ENCODE measurements at regions of chr1 and their contacts with region 1.

Region 1: DNA sequence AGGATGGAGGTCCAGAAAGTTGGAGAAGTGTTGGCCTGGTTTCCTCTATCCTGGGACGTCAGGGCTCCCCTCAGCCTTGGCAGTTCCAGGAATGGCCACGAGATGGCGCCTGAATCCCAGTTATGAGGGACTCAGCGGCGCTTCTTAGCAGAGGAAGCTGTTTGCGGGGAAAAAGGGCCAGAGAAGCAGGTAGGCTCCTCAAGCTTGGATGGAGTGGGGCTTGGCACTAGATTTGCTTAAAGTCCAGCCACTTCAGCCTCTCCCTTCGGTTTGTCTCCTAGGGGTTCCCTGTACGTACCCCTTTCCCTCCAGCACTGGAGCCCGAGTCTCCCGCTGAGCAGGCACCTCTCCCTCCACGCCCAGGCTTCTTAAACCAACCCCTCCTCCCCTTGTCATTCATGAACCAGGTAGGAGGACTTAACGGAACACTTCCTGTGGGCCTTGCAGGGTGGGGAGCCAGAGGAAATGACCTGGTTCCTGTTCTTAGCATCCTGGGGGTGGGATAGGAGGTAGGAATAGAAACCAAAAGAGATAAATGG is 32.0 kb upstream of the TENT5B start:
- DNase-seq: peak; percentile 64
- ATAC-seq: peak; percentile 98
- H3K4me3 ChIP-seq: no peak overlapping the region
- H3K27ac ChIP-seq: no peak overlapping the region
- H3K4me1 ChIP-seq: no peaks in the 10 kb centered on the region
- H3K27me3 ChIP-seq: 0 out of 2 replicates have a peak, but pooled peaks cover 2% of the 10 kb centered on the region
- CTCF ChIP-seq: peak; percentile 96
- POLR2A ChIP-seq: 0 out of 2 replicates have a peak, but pooled peaks have one; percentile 21
- RAD21 ChIP-seq: peak; percentile 96

Region 2: GRCh38 chr1:26417111-26417759 is 627.4 kb before region 1 on chr1:
- CTCF ChIA-PET with region 1: no interaction called
- POLR2A ChIA-PET with region 1: no interaction called
- dilution Hi-C with region 1: no loop called
- in situ Hi-C with region 1: no loop called
- intact Hi-C with region 1: no loop called
- DNase-seq: peak; percentile 64
- ATAC-seq: peak; percentile 97
- H3K4me3 ChIP-seq: no peak overlapping the region
- H3K27ac ChIP-seq: no peak overlapping the region
- H3K4me1 ChIP-seq: no peaks in the 10 kb centered on the region
- H3K27me3 ChIP-seq: peaks cover 64% of the 10 kb centered on the region
- CTCF ChIP-seq: peak; percentile 78
- POLR2A ChIP-seq: no peak
- RAD21 ChIP-seq: peak; percentile 71

Region 3: DNA sequence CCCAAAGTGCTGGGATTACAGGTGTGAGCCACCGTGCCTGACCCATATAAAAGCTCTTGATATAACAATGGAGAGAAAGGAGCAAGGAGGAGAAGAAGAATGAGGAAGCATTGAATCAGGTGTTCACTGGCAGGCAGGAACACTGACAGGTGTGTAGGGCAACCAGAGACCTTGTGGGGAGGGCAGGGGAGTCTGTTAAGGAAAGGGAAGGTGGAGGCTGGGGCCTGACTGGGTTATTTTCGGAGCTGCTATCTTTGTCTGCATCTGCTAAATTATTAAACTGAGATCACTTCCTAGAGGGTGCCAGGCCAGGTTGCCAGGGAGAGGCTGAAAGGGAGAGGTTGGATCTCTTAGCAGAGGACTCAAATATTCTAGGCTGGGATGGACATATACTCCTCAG is 58.0 kb before region 1 on chr1:
- CTCF ChIA-PET with region 1: no interaction called
- POLR2A ChIA-PET with region 1: no interaction called
- dilution Hi-C with region 1: no loop called
- in situ Hi-C with region 1: no loop called
- intact Hi-C with region 1: no loop called
- DNase-seq: no peak
- ATAC-seq: no peak
- H3K4me3 ChIP-seq: no peak overlapping the region
- H3K27ac ChIP-seq: no peak overlapping the region
- H3K4me1 ChIP-seq: peaks cover 11% of the 10 kb centered on the region
- H3K27me3 ChIP-seq: no peaks in the 10 kb centered on the region
- CTCF ChIP-seq: no peak
- POLR2A ChIP-seq: no peak
- RAD21 ChIP-seq: no peak

Region 4: DNA sequence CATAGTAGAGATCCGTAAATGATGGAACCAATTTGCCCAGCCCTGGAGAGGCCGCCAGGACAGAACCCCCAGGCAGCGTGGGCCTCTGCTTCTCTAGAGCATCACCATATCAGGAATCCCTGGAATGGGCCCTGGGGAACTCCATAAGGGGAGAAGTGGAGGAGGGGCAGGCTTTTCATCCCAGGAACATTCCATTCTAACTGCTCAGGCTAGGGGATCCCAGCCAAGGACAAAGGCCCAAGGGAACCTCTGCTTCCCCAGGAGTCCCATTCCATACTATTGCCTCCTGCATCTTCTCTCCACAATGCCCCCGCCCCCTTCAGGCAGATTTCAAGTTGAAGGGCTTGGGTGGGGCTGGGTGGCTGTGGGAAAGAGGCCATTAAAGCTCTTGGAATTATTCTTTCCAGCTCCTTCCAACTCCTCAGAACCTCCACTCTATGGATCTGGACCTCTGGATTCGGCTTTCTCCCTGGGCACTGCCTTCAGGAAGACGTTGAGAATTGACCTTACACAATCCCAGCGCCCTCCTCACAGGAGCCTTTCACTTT is 45.2 kb before region 1 on chr1:
- CTCF ChIA-PET with region 1: interaction called, 7 read pairs
- POLR2A ChIA-PET with region 1: no interaction called
- dilution Hi-C with region 1: no loop called
- in situ Hi-C with region 1: no loop called
- intact Hi-C with region 1: loop called (anchors 1 kb)
- DNase-seq: peak; percentile 98
- ATAC-seq: peak; percentile 70
- H3K4me3 ChIP-seq: no peak overlapping the region
- H3K27ac ChIP-seq: peak overlapping the region; percentile 88
- H3K4me1 ChIP-seq: peaks cover 51% of the 10 kb centered on the region
- H3K27me3 ChIP-seq: no peaks in the 10 kb centered on the region
- CTCF ChIP-seq: no peak
- POLR2A ChIP-seq: no peak; the same call in 1 of the 2 replicates
- RAD21 ChIP-seq: no peak; the same call in 1 of the 2 replicates

Region 5: DNA sequence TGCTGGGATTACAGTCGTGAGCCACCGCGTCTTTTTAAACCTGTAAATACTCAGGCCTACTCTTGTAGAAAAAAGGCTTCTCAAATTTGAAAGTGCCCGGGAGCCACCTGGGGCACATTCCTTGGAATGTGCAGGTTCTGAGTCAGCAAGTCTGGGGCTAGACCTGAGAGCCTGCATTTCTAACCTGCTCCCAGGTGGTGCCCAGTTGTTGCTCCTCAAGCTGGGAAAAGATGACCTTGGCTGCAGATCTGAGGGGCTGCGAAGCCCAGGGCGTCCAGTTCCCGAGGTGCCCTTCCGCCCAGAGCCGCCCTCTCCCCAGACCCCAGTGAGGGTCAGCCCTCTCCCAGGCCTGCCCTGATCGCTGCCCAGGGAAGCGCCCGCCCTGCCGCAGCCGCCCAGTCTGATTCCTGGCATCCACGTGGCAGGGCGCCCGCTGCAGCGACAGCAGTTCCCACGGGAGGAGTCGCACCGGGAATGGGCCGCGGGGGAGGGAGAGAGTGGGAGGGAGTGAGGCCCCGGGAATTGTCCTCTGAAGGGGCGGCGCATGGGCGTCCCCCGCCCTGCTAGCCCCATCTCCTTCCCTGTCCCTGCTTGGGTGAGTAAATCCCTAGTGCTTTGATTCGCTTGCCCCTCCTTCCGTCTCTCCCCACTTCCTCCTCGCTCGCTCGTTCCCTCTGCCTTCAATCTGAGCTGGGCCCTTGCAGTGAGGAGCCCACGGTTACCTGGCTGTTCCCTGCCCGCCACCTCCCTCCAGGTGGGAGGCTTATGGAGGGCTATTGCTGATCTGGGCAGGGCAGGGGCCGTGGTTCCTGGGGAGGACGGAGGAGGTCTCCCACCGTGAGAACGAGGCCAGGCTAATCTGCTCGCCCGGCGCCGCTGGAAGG is 13.2 kb before region 1 on chr1:
- CTCF ChIA-PET with region 1: interaction called, 17 read pairs
- POLR2A ChIA-PET with region 1: no interaction called
- dilution Hi-C with region 1: no loop called
- in situ Hi-C with region 1: no loop called
- intact Hi-C with region 1: no loop called
- DNase-seq: peak; percentile 67
- ATAC-seq: peak; percentile 91
- H3K4me3 ChIP-seq: no peak overlapping the region
- H3K27ac ChIP-seq: peak overlapping the region; percentile 2; the same call in 1 of the 2 replicates
- H3K4me1 ChIP-seq: peaks cover 12% of the 10 kb centered on the region
- H3K27me3 ChIP-seq: no peaks in the 10 kb centered on the region
- CTCF ChIP-seq: no peak
- POLR2A ChIP-seq: no peak
- RAD21 ChIP-seq: no peak

Region 6: DNA sequence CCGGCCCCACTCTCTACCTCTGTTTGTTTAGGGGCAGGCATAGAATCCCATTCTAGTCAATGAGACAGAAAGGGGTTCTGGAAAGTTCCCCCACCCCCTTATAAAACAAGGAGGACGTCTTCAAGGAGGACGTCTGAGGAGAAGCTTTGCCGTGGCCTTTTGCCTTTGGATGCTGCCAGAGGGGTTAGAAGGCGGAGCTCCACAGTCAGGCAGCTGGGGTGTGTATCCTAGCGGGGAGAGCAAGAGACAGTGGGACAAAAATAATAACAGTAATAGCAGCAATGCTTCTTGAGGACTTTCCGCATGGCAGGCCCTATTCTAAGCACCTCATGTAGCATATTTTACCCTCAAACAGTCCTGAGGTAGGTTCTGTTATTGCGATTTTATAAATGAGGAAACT is 16.2 kb after region 1 on chr1:
- CTCF ChIA-PET with region 1: interaction called, 10 read pairs
- POLR2A ChIA-PET with region 1: interaction called, 11 read pairs
- dilution Hi-C with region 1: no loop called
- in situ Hi-C with region 1: no loop called
- intact Hi-C with region 1: no loop called
- DNase-seq: no peak
- ATAC-seq: no peak
- H3K4me3 ChIP-seq: no peak overlapping the region
- H3K27ac ChIP-seq: no peak overlapping the region
- H3K4me1 ChIP-seq: no peaks in the 10 kb centered on the region
- H3K27me3 ChIP-seq: peaks cover 22% of the 10 kb centered on the region
- CTCF ChIP-seq: no peak
- POLR2A ChIP-seq: no peak
- RAD21 ChIP-seq: no peak

Region 7: DNA sequence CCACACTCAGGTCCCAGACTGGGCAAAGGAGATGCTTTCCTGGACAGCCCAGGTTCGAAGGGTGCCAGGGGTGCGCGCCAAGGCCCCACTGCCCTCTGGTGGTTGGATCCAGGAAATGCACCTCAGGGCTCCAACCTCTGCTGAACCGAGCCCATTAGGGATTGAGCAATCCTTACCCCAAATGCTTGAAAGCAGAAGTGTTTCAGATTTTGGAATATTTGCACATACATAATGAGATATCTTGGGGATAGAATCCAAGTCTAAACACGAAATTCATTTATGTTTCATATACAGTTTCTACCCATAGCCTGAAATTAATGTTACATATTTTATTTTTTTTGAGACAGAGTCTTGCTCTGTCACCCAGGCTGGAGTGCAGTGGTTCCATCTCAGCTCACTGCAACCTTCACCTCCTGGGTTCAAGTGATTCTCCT is 52.8 kb after region 1 on chr1:
- CTCF ChIA-PET with region 1: interaction called, 65 read pairs
- POLR2A ChIA-PET with region 1: interaction called, 8 read pairs
- dilution Hi-C with region 1: no loop called
- in situ Hi-C with region 1: loop called (anchors 5 kb)
- intact Hi-C with region 1: loop called (anchors 1 kb)
- DNase-seq: peak; percentile 66
- ATAC-seq: peak; percentile 75
- H3K4me3 ChIP-seq: no peak overlapping the region
- H3K27ac ChIP-seq: no peak overlapping the region
- H3K4me1 ChIP-seq: peaks cover 16% of the 10 kb centered on the region
- H3K27me3 ChIP-seq: no peaks in the 10 kb centered on the region
- CTCF ChIP-seq: peak; percentile 97
- POLR2A ChIP-seq: 0 out of 2 replicates have a peak, but pooled peaks have one; percentile 38
- RAD21 ChIP-seq: peak; percentile 93

Region 8: GRCh38 chr1:27192039-27192529 is 147.4 kb after region 1 on chr1:
- CTCF ChIA-PET with region 1: no interaction called
- POLR2A ChIA-PET with region 1: no interaction called
- dilution Hi-C with region 1: no loop called
- in situ Hi-C with region 1: no loop called
- intact Hi-C with region 1: loop called (anchors 10 kb)
- DNase-seq: no peak
- ATAC-seq: no peak
- H3K4me3 ChIP-seq: no peak overlapping the region
- H3K27ac ChIP-seq: no peak overlapping the region
- H3K4me1 ChIP-seq: peaks cover 2% of the 10 kb centered on the region; the same call in 1 of the 2 replicates
- H3K27me3 ChIP-seq: peaks cover 5% of the 10 kb centered on the region; the same call in 1 of the 2 replicates
- CTCF ChIP-seq: no peak
- POLR2A ChIP-seq: no peak
- RAD21 ChIP-seq: no peak

Region 9: DNA sequence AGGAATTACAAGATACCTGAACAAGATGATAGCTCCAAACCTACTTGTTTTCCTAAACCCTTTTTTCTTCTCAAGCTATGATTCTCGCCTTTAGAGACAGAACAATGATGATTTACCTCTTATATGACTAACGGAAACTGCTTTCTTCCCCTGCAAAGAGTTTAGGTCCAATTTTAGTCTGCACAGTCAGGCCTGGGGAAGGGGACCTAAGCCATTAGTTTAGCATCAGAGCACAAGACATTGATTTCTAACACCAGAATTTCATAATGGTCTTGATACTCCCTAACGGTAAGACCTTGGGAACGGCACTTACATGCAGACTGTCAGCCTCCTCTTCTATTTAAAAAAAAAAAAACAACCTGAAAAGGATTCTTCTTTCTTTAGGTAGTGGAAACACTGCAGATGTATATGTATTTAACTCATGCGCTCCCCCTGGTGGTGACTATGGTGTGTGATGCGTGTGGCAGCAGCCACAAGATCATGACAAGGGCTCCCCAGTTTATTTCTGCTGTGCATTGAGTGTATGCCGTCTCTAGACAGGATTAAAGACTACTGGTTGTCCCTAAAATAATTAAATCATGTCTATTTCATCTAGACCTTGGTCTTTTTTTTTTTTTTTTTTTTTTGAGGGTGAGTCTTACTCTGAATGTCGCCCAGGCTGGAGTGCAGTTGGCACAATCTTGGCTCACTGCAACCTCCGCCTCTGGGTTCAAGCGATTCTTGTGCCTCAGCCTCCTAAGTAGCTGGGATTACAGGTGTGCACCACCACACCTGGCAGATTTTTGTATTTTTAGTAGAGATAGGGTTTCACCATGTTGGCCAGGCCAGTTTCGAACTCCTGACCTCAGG is 240.0 kb after region 1 on chr1:
- CTCF ChIA-PET with region 1: no interaction called
- POLR2A ChIA-PET with region 1: no interaction called
- dilution Hi-C with region 1: no loop called
- in situ Hi-C with region 1: loop called (anchors 10 kb)
- intact Hi-C with region 1: loop called (anchors 1 kb)
- DNase-seq: peak; percentile 76
- ATAC-seq: peak; percentile 91
- H3K4me3 ChIP-seq: no peak overlapping the region
- H3K27ac ChIP-seq: no peak overlapping the region
- H3K4me1 ChIP-seq: no peaks in the 10 kb centered on the region
- H3K27me3 ChIP-seq: no peaks in the 10 kb centered on the region
- CTCF ChIP-seq: peak; percentile 81
- POLR2A ChIP-seq: no peak
- RAD21 ChIP-seq: peak; percentile 79

Measured in IMR-90 (cell line).